Activated CD8-positive, alpha-beta memory T cell treated with anti-CD3 and anti-CD28 coated beads, Interleukin-2, amount 10 ng/mL, durations not matched to agents 7 days and 5 days (primary cell): ENCODE measurements at regions of chr1 and their contacts with region 1.

Region 1: GRCh38 chr1:47262787-47263413 is 30.9 kb upstream of the TAL1 start:
- DNase-seq: peak; percentile 61
- ATAC-seq: peak; percentile 53
- H3K4me3 Mint-ChIP-seq: no peak overlapping the region
- H3K27ac Mint-ChIP-seq: no peak overlapping the region
- H3K4me1 Mint-ChIP-seq: no peaks in the 10 kb centered on the region
- H3K27me3 Mint-ChIP-seq: no peaks in the 10 kb centered on the region

Region 2: GRCh38 chr1:47036764-47037163 is 226.1 kb before region 1 on chr1:
- CTCF ChIA-PET with region 1: no interaction called
- DNase-seq: no peak
- ATAC-seq: no peak
- H3K4me3 Mint-ChIP-seq: no peak overlapping the region
- H3K27ac Mint-ChIP-seq: no peak overlapping the region
- H3K4me1 Mint-ChIP-seq: no peaks in the 10 kb centered on the region
- H3K27me3 Mint-ChIP-seq: peaks cover 38% of the 10 kb centered on the region

Region 3: GRCh38 chr1:47192458-47193384 is 70.2 kb before region 1 on chr1:
- CTCF ChIA-PET with region 1: interaction called, 57 read pairs
- DNase-seq: peak; percentile 75
- ATAC-seq: peak; percentile 82
- H3K4me3 Mint-ChIP-seq: no peak overlapping the region
- H3K27ac Mint-ChIP-seq: no peak overlapping the region
- H3K4me1 Mint-ChIP-seq: no peaks in the 10 kb centered on the region
- H3K27me3 Mint-ChIP-seq: peaks cover 9% of the 10 kb centered on the region

Region 4: GRCh38 chr1:47478090-47478489 is 215.2 kb after region 1 on chr1:
- CTCF ChIA-PET with region 1: no interaction called
- DNase-seq: no peak
- ATAC-seq: no peak
- H3K4me3 Mint-ChIP-seq: no peak overlapping the region
- H3K27ac Mint-ChIP-seq: no peak overlapping the region
- H3K4me1 Mint-ChIP-seq: no peaks in the 10 kb centered on the region
- H3K27me3 Mint-ChIP-seq: peaks cover 12% of the 10 kb centered on the region